Activated CD4-positive, alpha-beta memory T cell treated with anti-CD3 and anti-CD28 coated beads, Interleukin-2, amount 10 ng/mL, durations not matched to agents 7 days and 5 days (primary cell): ENCODE measurements at regions of chr5 and their contacts with region 1.

Region 1: DNA sequence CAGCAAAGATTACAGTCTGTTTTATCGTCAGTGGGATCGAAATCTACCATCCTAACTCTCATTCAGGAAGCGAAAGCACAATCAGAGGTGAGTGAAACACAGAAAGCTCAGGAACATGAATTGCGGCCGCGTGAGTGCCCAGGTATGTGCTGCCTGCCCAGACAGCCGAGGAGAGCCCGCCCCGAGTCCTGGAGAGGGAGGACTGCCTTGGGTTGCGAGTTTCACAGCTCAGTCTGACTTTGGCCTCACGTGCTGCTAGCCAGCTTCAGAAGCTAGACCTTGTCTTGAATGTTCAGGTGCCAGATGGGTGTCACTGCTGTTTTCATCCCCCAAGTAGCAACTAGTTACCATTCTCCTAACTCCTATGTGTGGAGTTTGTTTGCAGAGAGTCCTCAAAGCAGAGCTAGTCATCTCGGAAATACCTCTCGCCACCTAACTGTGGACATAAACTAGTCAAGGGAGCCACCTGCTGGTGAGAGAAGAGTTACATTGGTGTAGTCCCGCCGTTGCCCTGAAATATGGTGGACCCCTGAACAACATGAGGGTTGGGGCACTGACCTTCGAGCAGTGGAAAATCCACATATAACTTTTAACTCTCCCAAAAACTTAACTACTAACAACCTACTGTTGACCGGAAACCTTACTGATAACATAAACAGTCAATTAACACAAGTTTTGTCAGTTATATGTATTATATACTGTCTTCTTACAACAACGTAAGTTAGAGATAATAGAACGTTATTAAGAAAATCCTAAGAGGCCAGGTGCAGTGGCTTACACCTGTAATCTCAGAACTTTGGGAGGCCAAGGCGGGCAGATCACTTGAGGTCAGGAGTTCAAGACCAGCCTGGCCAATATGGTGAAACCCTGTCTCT is 80.9 kb downstream of the GOLPH3 start:
- DNase-seq: peak; percentile 63
- H3K4me3 Mint-ChIP-seq: no peak overlapping the region
- H3K27ac Mint-ChIP-seq: no peak overlapping the region
- H3K4me1 Mint-ChIP-seq: peaks cover 2% of the 10 kb centered on the region
- H3K27me3 Mint-ChIP-seq: no peaks in the 10 kb centered on the region

Region 2: DNA sequence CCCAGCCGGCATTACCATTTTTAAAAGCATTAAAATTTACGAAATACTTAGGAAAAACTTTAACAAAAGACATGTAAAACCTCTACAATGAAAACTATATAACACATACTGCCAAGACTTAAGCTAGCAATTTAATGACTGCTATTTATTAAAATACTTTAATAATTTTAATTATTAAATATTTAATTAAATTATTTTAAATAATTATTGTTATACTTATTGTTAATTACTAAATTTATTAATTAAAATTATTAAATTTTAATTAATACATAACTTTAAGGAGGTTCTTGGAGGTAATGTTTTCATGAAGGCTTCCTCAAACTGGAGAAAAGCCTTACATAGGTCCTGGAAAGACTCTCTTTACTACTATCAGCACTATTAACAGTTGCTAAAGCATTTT is 513.6 kb before region 1 on chr5:
- CTCF ChIA-PET with region 1: interaction called, 11 read pairs
- POLR2A ChIA-PET with region 1: no interaction called
- DNase-seq: no peak
- H3K4me3 Mint-ChIP-seq: no peak overlapping the region
- H3K27ac Mint-ChIP-seq: no peak overlapping the region
- H3K4me1 Mint-ChIP-seq: peaks cover 7% of the 10 kb centered on the region
- H3K27me3 Mint-ChIP-seq: peaks cover 22% of the 10 kb centered on the region

Region 3: GRCh38 chr5:31825518-31826068 is 267.6 kb before region 1 on chr5:
- CTCF ChIA-PET with region 1: interaction called, 20 read pairs
- POLR2A ChIA-PET with region 1: no interaction called
- DNase-seq: peak; percentile 24
- H3K4me3 Mint-ChIP-seq: no peak overlapping the region
- H3K27ac Mint-ChIP-seq: no peak overlapping the region
- H3K4me1 Mint-ChIP-seq: peaks cover 2% of the 10 kb centered on the region
- H3K27me3 Mint-ChIP-seq: peaks cover 2% of the 10 kb centered on the region

Region 4: DNA sequence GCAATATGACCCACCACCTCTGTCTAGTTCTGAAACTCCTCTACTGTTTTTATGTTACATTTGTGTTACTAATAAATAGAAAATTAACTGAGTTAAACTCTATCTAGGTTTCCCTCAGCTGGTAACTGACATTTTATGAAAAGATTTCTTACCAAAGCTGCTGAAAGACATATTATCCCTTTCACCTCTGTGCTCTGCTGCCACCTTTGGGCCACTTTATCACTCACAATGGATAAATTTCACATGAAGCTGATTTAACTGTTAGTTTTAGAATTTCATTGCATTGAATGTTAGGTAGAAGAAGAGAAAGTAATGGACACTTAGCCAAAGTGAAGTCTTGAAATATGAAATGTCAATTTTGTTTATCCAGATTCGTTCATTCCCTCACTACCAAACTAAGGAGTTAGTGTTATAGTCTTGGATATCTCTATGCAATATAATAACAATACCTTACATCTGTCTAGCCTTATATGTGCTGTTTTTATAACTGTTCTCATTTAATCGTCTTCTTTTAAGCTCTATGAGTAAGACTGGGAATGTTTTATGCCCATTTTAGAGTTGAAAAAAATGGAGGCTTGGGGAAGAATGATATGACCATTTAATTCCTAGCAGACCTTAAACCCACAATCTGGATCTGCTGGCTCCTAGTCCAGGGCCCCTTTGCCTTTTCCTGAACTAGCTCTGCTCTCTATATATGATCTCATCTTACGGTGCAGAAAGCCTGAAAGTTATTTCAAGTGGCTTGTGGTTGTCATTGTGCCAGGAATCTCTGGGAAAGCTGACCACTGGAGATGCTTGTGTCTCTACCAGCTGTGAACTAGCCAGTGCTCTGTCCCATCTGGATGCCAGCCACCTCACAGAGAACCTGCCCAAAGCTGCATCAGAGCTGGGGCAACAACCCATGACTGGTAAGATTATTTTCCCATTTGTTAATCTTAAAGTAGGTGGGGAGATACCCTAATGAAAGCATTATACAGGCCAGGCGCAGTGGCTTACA is 16.2 kb before region 1 on chr5:
- CTCF ChIA-PET with region 1: interaction called, 15 read pairs
- POLR2A ChIA-PET with region 1: no interaction called
- DNase-seq: peak; percentile 39
- H3K4me3 Mint-ChIP-seq: no peak overlapping the region
- H3K27ac Mint-ChIP-seq: no peak overlapping the region
- H3K4me1 Mint-ChIP-seq: no peaks in the 10 kb centered on the region
- H3K27me3 Mint-ChIP-seq: peaks cover 2% of the 10 kb centered on the region